Left ventricle myocardium superior (tissue), 1 donor: ENCODE measurements at regions of chr16 and their contacts with region 1.

Region 1: DNA sequence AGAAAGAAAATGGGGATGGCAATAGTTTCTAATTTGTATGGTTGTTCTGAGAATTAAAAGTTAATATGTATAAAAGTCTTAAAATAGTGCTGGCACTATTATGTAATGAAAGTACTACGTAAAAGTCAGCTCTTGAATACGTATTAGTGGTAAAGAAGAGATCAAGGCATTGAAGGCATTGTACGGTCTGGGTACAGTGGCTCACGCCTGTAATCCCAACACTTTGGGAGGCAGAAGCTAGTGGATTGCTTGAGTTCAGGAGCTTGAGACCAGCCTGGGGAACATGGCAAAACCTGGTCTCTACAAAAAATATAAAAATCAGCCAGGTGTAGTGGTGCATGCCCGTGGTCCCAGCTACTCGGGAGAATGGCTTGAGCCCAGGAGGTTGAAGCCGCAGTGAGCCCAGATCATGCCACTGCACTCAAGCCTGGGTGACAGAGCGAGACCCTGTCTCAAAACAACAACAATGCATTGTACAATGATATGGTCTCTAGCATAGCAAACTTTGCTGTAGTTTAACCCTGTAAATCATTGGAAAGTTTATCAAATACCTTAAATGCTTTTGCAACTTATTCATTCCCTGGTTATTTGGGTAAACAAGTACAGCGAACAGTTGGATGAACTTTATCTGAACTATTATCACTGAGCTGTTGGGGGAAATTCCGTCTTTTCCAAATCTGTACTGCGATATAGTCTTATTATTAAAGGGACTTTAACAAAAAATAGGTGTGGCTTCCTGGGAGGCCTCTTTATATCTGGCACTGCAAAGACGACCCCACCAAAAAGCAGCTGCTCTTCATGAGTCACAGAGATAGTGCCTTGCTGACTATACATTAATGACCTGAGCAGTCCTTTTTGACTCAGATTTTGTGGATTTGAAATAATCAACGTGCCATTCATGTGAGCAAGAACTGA is 73.6 kb downstream of the GPRC5B start:
- DNase-seq: no peak
- ATAC-seq: peak; percentile 20

Region 2: GRCh38 chr16:19860166-19861041 is 49.3 kb after region 1 on chr16:
- intact Hi-C with region 1: loop called (anchors 10 kb)
- DNase-seq: no peak
- ATAC-seq: no peak